Prostate gland (tissue), 2 donors: ENCODE measurements at regions of chr3 and their contacts with region 1.

Region 1: GRCh38 chr3:129934234-129935123 is 40.0 kb upstream of the TRH start:
- DNase-seq: no peak
- H3K4me3 ChIP-seq: peak overlapping the region in 1 of 2 donors; percentile 11
- H3K27ac ChIP-seq: no peak overlapping the region
- H3K4me1 ChIP-seq: no peaks in the 10 kb centered on the region
- H3K27me3 ChIP-seq: no peaks in the 10 kb centered on the region
- CTCF ChIP-seq: peak; percentile 69 to 94 (median 91)
- POLR2A ChIP-seq: no peak

Region 2: DNA sequence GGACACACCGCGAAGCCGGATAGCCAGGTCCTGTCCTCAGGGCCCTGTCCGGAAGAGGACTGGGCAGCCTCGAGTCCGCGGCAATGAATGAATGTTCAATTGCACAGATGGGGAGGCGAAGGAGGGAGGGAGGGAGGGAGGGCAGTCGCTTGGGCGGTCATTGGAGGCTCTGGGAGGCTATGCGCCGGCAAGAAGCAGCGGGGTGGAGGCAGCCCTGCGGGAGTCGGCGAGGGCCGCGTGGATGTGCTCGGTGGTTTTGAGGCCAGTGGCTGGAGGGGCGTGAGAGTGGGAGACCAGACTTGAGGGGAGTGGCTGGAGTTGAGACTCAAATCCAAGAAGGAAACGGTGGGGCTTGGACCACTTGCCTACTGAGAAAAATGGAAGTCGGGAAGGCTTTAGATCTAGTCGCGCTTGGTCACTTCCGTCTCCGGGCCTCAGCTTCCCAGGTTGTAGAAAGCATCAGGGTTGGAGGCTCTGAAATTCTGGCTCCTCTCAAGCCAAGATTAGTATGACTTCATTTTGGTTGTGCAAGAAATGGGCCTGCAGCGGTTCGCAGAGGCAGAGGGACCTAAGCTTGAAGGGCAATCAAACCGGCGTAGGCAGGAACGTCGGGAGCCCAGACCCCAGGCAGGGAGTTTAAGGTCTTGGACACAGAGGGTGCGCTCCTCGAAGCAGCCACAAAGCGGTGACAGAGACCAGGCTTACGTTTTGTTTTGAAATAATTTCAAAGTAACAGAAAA is 306.9 kb before region 1 on chr3:
- intact Hi-C with region 1: loop called (anchors 2 kb)
- DNase-seq: peak; percentile 55
- H3K4me3 ChIP-seq: peak overlapping the region; percentile 47 to 52
- H3K27ac ChIP-seq: peak overlapping the region; percentile 87 to 94
- H3K4me1 ChIP-seq: peaks cover 5% of the 10 kb centered on the region
- H3K27me3 ChIP-seq: no peaks in the 10 kb centered on the region
- CTCF ChIP-seq: peak; percentile 45 to 87 (median 76)
- POLR2A ChIP-seq: no peak

Region 3: DNA sequence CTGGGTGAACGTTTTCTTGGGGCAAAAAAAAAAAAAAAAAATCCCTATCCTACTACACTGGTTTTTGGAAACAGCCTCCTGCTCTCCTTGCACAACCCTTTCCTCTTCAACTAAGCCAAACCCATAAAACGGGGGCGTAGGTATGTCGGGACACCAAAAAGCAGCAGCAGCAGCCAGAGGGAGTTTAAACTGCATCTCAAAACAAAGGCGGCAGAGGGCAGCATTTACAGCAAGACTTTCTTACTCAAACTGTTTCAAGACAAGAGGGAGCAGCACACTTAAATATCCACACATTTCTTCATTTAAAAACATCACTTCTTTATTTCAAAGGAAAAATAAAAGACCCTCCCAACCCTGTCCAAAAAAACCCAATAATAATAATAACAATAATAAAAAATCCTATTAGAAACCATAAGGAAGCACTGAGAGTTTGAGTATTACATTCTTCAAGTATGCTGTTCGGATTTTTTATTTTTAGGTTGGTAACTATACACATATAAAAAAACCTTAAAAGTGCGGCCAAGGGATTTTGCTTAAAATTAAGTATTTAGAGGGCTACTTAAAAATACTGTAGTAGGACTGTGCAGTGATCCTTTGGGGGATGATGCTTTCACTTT is 284.1 kb before region 1 on chr3:
- intact Hi-C with region 1: loop called (anchors 5 kb)
- DNase-seq: peak; percentile 73
- H3K4me3 ChIP-seq: no peak overlapping the region
- H3K27ac ChIP-seq: no peak overlapping the region
- H3K4me1 ChIP-seq: no peaks in the 10 kb centered on the region
- H3K27me3 ChIP-seq: no peaks in the 10 kb centered on the region
- CTCF ChIP-seq: peak; percentile 21 to 87 (median 76)
- POLR2A ChIP-seq: no peak